Activated B cell treated with CpG ODN at 0.5 μM for 24 hours (primary cell): ENCODE measurements at regions of chr1 and their contacts with region 1.

Region 1: GRCh38 chr1:16960560-16961296 is 19.7 kb downstream of the MFAP2 start:
- DNase-seq: peak; percentile 70
- ATAC-seq: peak; percentile 93
- H3K4me3 Mint-ChIP-seq: peak overlapping the region; percentile 83
- H3K27ac Mint-ChIP-seq: peak overlapping the region; percentile 68
- H3K4me1 Mint-ChIP-seq: peaks cover 10% of the 10 kb centered on the region
- H3K27me3 Mint-ChIP-seq: no peaks in the 10 kb centered on the region
- CTCF ChIP-seq: no peak

Region 2: GRCh38 chr1:16521288-16521583 is 439.5 kb before region 1 on chr1:
- CTCF ChIA-PET with region 1: no interaction called
- POLR2A ChIA-PET with region 1: no interaction called
- intact Hi-C with region 1: loop called (anchors 10 kb)
- DNase-seq: no peak
- ATAC-seq: no peak
- H3K4me3 Mint-ChIP-seq: no peak overlapping the region
- H3K27ac Mint-ChIP-seq: no peak overlapping the region
- H3K4me1 Mint-ChIP-seq: peaks cover 7% of the 10 kb centered on the region
- H3K27me3 Mint-ChIP-seq: peaks cover 26% of the 10 kb centered on the region
- CTCF ChIP-seq: no peak

Region 3: GRCh38 chr1:16618719-16619118 is 342.0 kb before region 1 on chr1:
- CTCF ChIA-PET with region 1: interaction called, 15 read pairs
- POLR2A ChIA-PET with region 1: no interaction called
- intact Hi-C with region 1: no loop called
- DNase-seq: peak; percentile 26
- ATAC-seq: no peak
- H3K4me3 Mint-ChIP-seq: no peak overlapping the region
- H3K27ac Mint-ChIP-seq: no peak overlapping the region
- H3K4me1 Mint-ChIP-seq: no peaks in the 10 kb centered on the region
- H3K27me3 Mint-ChIP-seq: no peaks in the 10 kb centered on the region
- CTCF ChIP-seq: no peak

Region 4: DNA sequence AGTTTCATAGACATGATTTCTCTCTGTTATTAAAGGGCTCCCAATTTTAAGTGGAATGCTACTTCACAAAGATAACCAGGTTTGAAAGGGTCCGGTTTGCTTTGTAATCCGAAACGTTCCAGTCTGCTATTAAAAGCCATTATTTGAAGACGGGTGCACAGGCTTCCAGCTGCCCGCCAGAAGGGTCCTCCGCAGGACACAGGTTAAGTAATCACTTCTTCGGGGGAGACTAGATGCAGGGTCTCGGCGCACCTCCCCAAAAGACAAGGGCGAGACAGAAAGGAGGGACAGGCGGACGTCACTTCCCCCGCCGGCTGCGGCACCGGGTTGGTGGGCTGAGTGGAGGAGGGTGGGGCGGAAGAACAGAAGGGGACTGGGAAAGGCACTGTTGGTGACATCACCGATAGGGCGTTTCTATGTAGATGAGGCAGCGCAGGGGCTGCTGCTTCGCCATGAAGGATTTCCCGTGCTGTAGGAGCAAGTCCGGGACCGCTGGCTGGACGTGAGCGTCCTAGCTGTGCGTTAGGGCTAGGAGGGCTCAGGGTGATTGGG is 56.1 kb before region 1 on chr1:
- CTCF ChIA-PET with region 1: interaction called, 3 read pairs
- POLR2A ChIA-PET with region 1: interaction called, 19 read pairs
- intact Hi-C with region 1: no loop called
- DNase-seq: peak; percentile 86
- ATAC-seq: peak; percentile 90
- H3K4me3 Mint-ChIP-seq: no peak overlapping the region
- H3K27ac Mint-ChIP-seq: no peak overlapping the region
- H3K4me1 Mint-ChIP-seq: peaks cover 40% of the 10 kb centered on the region
- H3K27me3 Mint-ChIP-seq: no peaks in the 10 kb centered on the region
- CTCF ChIP-seq: no peak

Region 5: GRCh38 chr1:16913833-16914662 is 46.7 kb before region 1 on chr1:
- CTCF ChIA-PET with region 1: interaction called, 3 read pairs
- POLR2A ChIA-PET with region 1: no interaction called
- intact Hi-C with region 1: loop called (anchors 2 kb)
- DNase-seq: peak; percentile 89
- ATAC-seq: peak; percentile 98
- H3K4me3 Mint-ChIP-seq: peak overlapping the region; percentile 84
- H3K27ac Mint-ChIP-seq: peak overlapping the region; percentile 73
- H3K4me1 Mint-ChIP-seq: peaks cover 29% of the 10 kb centered on the region
- H3K27me3 Mint-ChIP-seq: no peaks in the 10 kb centered on the region
- CTCF ChIP-seq: no peak